WTC11 (cell line): ENCODE measurements at regions of chr5 and their contacts with region 1.

Region 1: GRCh38 chr5:31617867-31618266 is 21.1 kb upstream of the PDZD2 start:
- DNase-seq: no peak
- ATAC-seq: no peak
- H3K4me3 Mint-ChIP-seq: no peak overlapping the region
- H3K27ac Mint-ChIP-seq: peak overlapping the region; percentile 86
- H3K4me1 Mint-ChIP-seq: peaks cover 47% of the 10 kb centered on the region
- H3K27me3 Mint-ChIP-seq: no peaks in the 10 kb centered on the region
- CTCF ChIP-seq: no peak

Region 2: GRCh38 chr5:31645420-31646081 is 27.7 kb after region 1 on chr5:
- CTCF ChIA-PET with region 1: no interaction called
- POLR2A ChIA-PET with region 1: no interaction called
- DNase-seq: no peak
- ATAC-seq: no peak; the same call in 1 of the 2 replicates
- H3K4me3 Mint-ChIP-seq: no peak overlapping the region
- H3K27ac Mint-ChIP-seq: no peak overlapping the region
- H3K4me1 Mint-ChIP-seq: peaks cover under 1% of the 10 kb centered on the region
- H3K27me3 Mint-ChIP-seq: peaks cover 4% of the 10 kb centered on the region; the same call in 1 of the 2 replicates
- CTCF ChIP-seq: no peak

Region 3: DNA sequence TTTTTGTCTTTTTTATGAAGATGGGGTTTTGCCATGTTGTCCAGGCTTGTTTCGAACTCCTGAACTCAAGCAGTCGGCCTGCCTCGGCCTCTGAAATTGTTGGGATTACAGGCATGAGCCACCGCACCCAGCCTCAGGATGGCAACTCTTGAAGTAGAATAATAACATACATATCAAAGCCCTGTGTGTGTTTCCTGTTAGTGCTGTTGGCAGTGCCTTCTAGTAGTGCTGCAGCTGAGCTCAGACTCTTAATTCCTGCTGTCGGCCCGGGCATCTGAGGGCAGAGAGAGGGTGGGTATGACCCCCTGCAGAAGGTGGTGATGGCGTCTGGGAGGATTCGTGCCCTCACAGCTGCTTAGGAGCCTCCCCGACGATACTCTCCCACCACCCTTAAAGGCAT is 248.3 kb after region 1 on chr5:
- CTCF ChIA-PET with region 1: no interaction called
- POLR2A ChIA-PET with region 1: interaction called, 11 read pairs
- DNase-seq: no peak
- ATAC-seq: no peak
- H3K4me3 Mint-ChIP-seq: no peak overlapping the region
- H3K27ac Mint-ChIP-seq: no peak overlapping the region
- H3K4me1 Mint-ChIP-seq: peaks cover 37% of the 10 kb centered on the region
- H3K27me3 Mint-ChIP-seq: no peaks in the 10 kb centered on the region
- CTCF ChIP-seq: no peak